ENCODE measurements at regions of chr19 and their contacts with region 1.

Region 1: GRCh38 chr19:54137086-54137921 is at the start of gene CNOT3:
- DNase-seq: peak; percentile 100
- ATAC-seq: peak; percentile 84
- H3K4me3 ChIP-seq: peak within 1 kb of the TSS; percentile 76 to 82
- H3K27ac ChIP-seq: peak within 1 kb of the TSS; percentile 77
- H3K4me1 ChIP-seq: peaks cover 15 to 31% of the 10 kb centered on the region in 2 experiments
- H3K27me3 ChIP-seq: no peaks in the 10 kb centered on the region
- CTCF ChIP-seq: no peak
- POLR2A ChIP-seq: no peak
- RAD21 ChIP-seq: no peak
- total RNA-seq, gene CNOT3: 76.7 TPM

Region 2: GRCh38 chr19:54115109-54116063 is 21.9 kb before region 1 on chr19 and contains the starts of genes PRPF31 and TFPT:
- CTCF ChIA-PET with region 1: no interaction called
- POLR2A ChIA-PET with region 1: interaction called, 21 read pairs
- RAD21 ChIA-PET with region 1: no interaction called
- intact Hi-C with region 1: no loop called
- DNase-seq: peak; percentile 97
- ATAC-seq: peak; percentile 93
- H3K4me3 ChIP-seq: peak within 1 kb of the TSS; percentile 89 to 91
- H3K27ac ChIP-seq: peak within 1 kb of the TSS; percentile 60
- H3K4me1 ChIP-seq: peaks cover 8 to 19% of the 10 kb centered on the region in 2 experiments; a peak in 3 of 4 replicates
- H3K27me3 ChIP-seq: no peaks in the 10 kb centered on the region
- CTCF ChIP-seq: no peak
- POLR2A ChIP-seq: peak; percentile 28
- RAD21 ChIP-seq: no peak
- total RNA-seq, gene PRPF31: 99.0 TPM
- total RNA-seq, gene TFPT: 7.1 TPM

Region 3: DNA sequence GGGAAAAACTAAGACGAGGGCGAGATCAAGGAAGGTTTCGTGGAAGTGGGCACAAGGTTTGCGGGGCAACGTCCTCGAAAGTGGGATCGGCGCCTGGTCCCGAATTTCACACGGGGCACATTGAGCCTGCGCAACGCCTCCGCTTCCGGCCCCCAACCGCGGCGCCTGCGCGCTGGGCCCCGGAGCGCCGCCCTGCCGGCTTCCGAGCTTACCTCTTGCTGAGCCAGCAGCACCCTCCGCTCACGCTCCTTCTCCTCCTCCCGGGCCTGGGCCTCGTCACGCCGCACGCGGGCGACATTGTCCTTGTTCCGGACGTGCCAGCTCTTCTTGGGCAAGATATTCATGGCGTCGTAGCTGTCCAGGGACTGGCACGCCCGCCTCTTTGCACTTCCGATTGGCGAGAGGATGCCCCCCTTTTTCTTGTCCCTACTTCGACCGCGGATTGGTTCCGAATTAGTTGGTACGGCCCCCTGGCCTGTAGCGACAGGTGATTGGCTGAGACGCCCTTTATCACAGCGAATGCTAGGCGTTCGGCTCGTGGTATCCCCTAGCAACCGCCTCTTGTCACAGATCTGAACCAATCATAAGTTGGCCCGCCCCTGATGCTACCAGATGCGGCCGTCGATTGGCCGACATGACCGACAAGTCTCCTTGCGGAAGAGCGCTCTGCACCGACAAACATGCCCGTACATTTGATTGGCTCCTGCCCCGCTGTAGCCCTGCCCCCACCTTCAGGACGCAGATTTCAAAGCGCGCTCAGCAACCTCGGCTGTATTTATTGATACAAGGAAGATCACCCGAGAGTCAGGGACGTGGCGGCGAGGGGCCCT is 22.3 kb after region 1 on chr19 and contains the start of gene LENG1:
- CTCF ChIA-PET with region 1: no interaction called
- POLR2A ChIA-PET with region 1: interaction called, 13 read pairs
- RAD21 ChIA-PET with region 1: no interaction called
- intact Hi-C with region 1: loop called (anchors 1 kb)
- DNase-seq: peak; percentile 100
- ATAC-seq: peak; percentile 85
- H3K4me3 ChIP-seq: peak within 1 kb of the TSS; percentile 82 to 84
- H3K27ac ChIP-seq: peak within 1 kb of the TSS; percentile 87
- H3K4me1 ChIP-seq: peaks cover 26 to 44% of the 10 kb centered on the region in 2 experiments
- H3K27me3 ChIP-seq: no peaks in the 10 kb centered on the region
- CTCF ChIP-seq: 0 out of 6 replicates have a peak, but pooled peaks of 2 of the 3 experiments have one; percentile 11 to 19
- POLR2A ChIP-seq: peak; percentile 61
- RAD21 ChIP-seq: no peak
- total RNA-seq, gene LENG1: 7.6 TPM

Region 4: GRCh38 chr19:54168174-54168917 is 31.0 kb after region 1 on chr19:
- CTCF ChIA-PET with region 1: interaction called, 11 read pairs
- POLR2A ChIA-PET with region 1: interaction called, 8 read pairs
- RAD21 ChIA-PET with region 1: no interaction called
- intact Hi-C with region 1: no loop called
- DNase-seq: peak; percentile 69
- ATAC-seq: peak; percentile 65
- H3K4me3 ChIP-seq: no peak overlapping the region
- H3K27ac ChIP-seq: no peak overlapping the region; the same call in 1 of the 2 replicates
- H3K4me1 ChIP-seq: peaks cover 6 to 32% of the 10 kb centered on the region in 2 experiments; a peak in 3 of 4 replicates
- H3K27me3 ChIP-seq: no peaks in the 10 kb centered on the region
- CTCF ChIP-seq: peak in 2 of 3 experiments; percentile 66 to 91; a peak in 5 of 6 replicates
- POLR2A ChIP-seq: no peak
- RAD21 ChIP-seq: no peak; the same call in 1 of the 2 replicates

Region 5: GRCh38 chr19:54203151-54203611 is 65.9 kb after region 1 on chr19:
- CTCF ChIA-PET with region 1: no interaction called
- POLR2A ChIA-PET with region 1: interaction called, 26 read pairs
- RAD21 ChIA-PET with region 1: no interaction called
- intact Hi-C with region 1: no loop called
- DNase-seq: no peak
- ATAC-seq: no peak
- H3K4me3 ChIP-seq: 0 out of 4 replicates have a peak overlapping the region, but pooled peaks of 1 of the 2 experiments have one; percentile 8
- H3K27ac ChIP-seq: no peak overlapping the region
- H3K4me1 ChIP-seq: peaks cover 9 to 51% of the 10 kb centered on the region in 2 experiments
- H3K27me3 ChIP-seq: no peaks in the 10 kb centered on the region
- CTCF ChIP-seq: no peak
- POLR2A ChIP-seq: no peak
- RAD21 ChIP-seq: no peak

Region 6: DNA sequence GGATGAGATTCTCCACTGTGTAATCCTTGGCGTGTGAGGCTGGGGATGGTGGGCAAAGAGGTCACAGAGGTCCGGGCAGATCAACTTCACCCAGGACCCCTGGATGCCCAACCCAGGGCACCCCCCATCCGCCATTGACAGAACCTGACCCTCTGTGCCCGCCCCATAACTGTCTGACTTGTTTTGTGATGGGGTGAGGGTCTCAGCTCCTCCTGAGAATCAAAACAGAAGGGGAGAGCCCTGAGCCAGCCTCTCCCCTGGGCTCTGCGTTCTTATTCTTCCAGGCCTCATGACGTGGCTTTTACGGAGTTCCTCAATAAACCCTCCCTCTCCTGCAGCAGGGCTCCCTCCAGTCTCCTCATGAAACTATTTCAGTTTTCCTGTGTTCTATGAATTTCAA is 101.7 kb after region 1 on chr19:
- CTCF ChIA-PET with region 1: no interaction called
- POLR2A ChIA-PET with region 1: no interaction called
- RAD21 ChIA-PET with region 1: no interaction called
- intact Hi-C with region 1: no loop called
- DNase-seq: no peak
- ATAC-seq: no peak
- H3K4me3 ChIP-seq: no peak overlapping the region
- H3K27ac ChIP-seq: no peak overlapping the region
- H3K4me1 ChIP-seq: peaks cover 0 to 3% of the 10 kb centered on the region in 2 experiments; a peak in 1 of 4 replicates
- H3K27me3 ChIP-seq: no peaks in the 10 kb centered on the region
- CTCF ChIP-seq: no peak
- POLR2A ChIP-seq: no peak
- RAD21 ChIP-seq: no peak

Measured in HCT116 (cell line).